ENCODE measurements at regions of chr5 and their contacts with region 1.

Region 1: DNA sequence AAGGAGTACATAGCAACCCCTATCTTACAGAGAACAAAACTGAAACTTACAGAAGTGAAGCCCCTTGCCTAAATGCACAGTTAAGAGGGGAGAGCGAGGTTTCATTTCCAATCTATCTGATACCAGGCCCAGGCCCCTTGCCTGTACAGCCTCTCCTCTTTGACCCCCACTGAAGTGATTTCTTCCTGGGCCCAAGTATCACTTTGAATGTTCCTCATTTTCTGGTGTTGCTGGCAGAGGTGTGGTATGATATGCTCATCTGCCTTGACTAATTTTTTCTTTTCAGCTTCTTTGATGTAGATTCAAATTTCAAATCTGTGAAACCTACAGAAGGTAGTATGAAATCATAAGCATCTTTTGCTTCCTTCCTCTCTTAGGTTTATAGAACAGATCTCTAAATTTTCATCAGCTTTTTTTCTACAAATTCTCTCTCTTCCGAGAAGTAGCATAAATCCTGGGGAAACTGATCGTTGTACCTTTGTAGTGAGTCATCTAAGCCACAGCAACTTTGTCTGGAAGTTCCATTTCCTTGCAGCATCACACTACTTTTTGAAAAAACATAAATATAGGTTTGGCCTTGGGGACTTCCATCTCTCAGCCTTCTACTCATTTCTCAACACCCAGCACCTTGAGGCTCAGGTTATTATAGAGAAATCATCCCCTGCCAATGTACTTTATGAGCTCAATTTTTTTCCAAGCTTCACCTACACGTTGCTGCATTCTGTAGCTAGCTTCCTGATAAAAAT is 402.4 kb upstream of the PTGER4 start:
- DNase-seq: peak; percentile 67
- H3K4me3 Mint-ChIP-seq: no peak overlapping the region
- H3K27ac Mint-ChIP-seq: peak overlapping the region; percentile 95
- H3K4me1 Mint-ChIP-seq: peaks cover 73% of the 10 kb centered on the region
- H3K27me3 Mint-ChIP-seq: no peaks in the 10 kb centered on the region

Region 2: DNA sequence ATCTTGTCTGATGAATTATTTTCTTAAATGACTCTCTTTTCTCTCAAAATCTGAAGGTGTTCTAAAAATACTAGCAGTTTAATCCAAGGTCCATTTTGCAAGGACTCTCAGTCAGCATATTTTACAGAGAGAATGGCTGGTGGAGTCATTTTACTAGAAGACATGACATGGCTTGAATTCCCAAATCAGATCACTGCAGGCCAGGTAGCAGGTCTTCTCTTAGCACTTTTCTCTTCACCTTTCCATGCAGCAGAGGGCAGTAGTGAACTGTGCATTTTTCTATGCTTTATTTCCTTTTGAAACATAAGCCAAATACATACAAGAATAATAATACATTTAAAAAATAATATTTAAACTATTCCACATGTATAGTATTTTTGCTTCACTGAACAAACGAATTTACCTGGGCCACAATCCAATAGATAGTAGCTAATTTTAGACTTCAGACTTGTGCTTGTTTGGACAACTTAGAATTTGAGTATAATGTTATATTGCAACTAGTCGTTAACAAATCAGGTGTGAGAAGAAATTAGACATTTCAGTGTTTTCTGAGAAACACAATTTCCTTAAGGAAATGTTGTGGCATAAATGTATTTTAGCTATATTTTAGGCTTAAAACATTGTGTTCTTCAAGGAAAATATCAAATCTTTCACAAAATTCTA is 563.2 kb before region 1 on chr5:
- CTCF ChIA-PET with region 1: no interaction called
- intact Hi-C with region 1: loop called (anchors 5 kb)
- DNase-seq: peak; percentile 66
- H3K4me3 Mint-ChIP-seq: no peak overlapping the region
- H3K27ac Mint-ChIP-seq: no peak overlapping the region
- H3K4me1 Mint-ChIP-seq: no peaks in the 10 kb centered on the region
- H3K27me3 Mint-ChIP-seq: no peaks in the 10 kb centered on the region

Region 3: GRCh38 chr5:40191150-40191549 is 86.2 kb before region 1 on chr5:
- CTCF ChIA-PET with region 1: no interaction called
- intact Hi-C with region 1: no loop called
- DNase-seq: no peak
- H3K4me3 Mint-ChIP-seq: no peak overlapping the region
- H3K27ac Mint-ChIP-seq: no peak overlapping the region
- H3K4me1 Mint-ChIP-seq: no peaks in the 10 kb centered on the region
- H3K27me3 Mint-ChIP-seq: no peaks in the 10 kb centered on the region

Region 4: DNA sequence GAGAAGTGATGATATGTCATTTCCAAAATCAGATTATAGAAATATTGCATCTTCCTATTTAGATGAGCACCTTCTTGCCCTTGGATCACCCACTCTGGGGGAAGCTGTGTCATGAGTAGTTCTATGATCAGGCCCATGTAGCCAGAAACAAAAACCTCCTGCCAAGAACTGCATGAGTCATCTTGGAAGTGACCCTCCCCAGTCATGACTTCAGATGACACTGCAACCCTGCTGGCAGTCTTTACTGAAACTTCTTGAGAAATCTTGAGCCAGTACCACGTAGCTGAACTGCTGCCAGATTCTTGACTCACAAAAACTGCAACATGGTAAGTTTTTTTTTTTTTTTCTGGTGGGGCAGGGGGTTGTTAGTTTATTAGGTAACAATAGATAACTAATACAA is 37.2 kb before region 1 on chr5:
- CTCF ChIA-PET with region 1: no interaction called
- intact Hi-C with region 1: loop called (anchors 1 kb)
- DNase-seq: peak; percentile 77
- H3K4me3 Mint-ChIP-seq: no peak overlapping the region
- H3K27ac Mint-ChIP-seq: no peak overlapping the region
- H3K4me1 Mint-ChIP-seq: peaks cover 15% of the 10 kb centered on the region
- H3K27me3 Mint-ChIP-seq: no peaks in the 10 kb centered on the region

Region 5: GRCh38 chr5:40404613-40405012 is 127.3 kb after region 1 on chr5:
- CTCF ChIA-PET with region 1: interaction called, 5 read pairs
- intact Hi-C with region 1: loop called (anchors 1 kb)
- DNase-seq: no peak
- H3K4me3 Mint-ChIP-seq: peak overlapping the region; percentile 33
- H3K27ac Mint-ChIP-seq: peak overlapping the region; percentile 99
- H3K4me1 Mint-ChIP-seq: peaks cover 89% of the 10 kb centered on the region
- H3K27me3 Mint-ChIP-seq: no peaks in the 10 kb centered on the region

Region 6: GRCh38 chr5:40578501-40579451 is 301.4 kb after region 1 on chr5:
- CTCF ChIA-PET with region 1: interaction called, 3 read pairs
- intact Hi-C with region 1: loop called (anchors 1 kb)
- DNase-seq: peak; percentile 87
- H3K4me3 Mint-ChIP-seq: peak overlapping the region; percentile 66
- H3K27ac Mint-ChIP-seq: peak overlapping the region; percentile 92
- H3K4me1 Mint-ChIP-seq: peaks cover 37% of the 10 kb centered on the region
- H3K27me3 Mint-ChIP-seq: no peaks in the 10 kb centered on the region

Region 7: GRCh38 chr5:40755407-40756365 is 478.4 kb after region 1 on chr5 and contains the start of gene TTC33:
- CTCF ChIA-PET with region 1: interaction called, 4 read pairs
- intact Hi-C with region 1: loop called (anchors 5 kb)
- DNase-seq: peak; percentile 98
- H3K4me3 Mint-ChIP-seq: no peak within 1 kb of the TSS
- H3K27ac Mint-ChIP-seq: no peak within 1 kb of the TSS
- H3K4me1 Mint-ChIP-seq: peaks cover 10% of the 10 kb centered on the region
- H3K27me3 Mint-ChIP-seq: no peaks in the 10 kb centered on the region
- total RNA-seq, gene TTC33: 24.4 to 27.4 TPM

Measured in activated naive CD4-positive, alpha-beta T cell treated with anti-CD3 and anti-CD28 coated beads for 36 hours (primary cell).